ENCODE measurements at regions of chr20 and their contacts with region 1.

Region 1: DNA sequence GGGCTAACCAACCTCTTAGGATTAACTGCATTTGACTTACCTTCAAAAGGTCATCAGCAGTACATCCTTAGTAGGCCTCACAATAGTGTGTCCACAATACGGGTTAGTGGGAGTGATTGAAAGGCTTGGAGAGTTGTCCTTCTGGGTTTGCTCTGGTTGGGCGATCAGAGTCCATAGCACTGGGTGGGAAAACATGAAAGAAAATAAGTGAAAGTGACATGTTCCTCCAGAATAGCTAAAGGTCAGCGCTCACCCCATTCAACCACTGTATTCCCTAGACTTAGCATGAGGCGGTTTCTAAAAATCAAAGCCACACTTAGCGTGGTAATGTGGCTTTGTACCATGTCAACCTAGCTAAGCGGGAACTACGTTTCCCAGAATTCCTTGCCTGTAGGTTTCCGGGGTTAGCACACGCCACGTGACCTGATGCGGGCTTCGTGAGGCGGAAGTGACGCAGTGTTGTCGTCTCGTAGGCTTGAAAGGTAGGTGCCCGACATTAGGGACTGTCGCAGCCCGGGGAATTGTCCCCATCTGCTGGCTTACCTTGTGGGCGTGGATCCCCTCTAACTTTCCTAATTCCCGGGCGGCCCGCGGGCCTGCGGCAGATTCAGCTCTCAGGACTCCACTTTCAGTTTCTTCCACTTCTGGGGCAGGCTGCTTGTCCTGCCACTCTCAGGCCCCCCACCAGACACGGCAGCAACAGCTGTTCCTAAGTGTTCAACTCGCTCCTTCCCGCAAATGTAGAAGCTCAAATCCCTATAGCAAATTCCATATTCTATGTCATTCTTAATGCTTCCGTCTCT is 19.8 kb upstream of the SCP2D1 start:
- DNase-seq: peak; percentile 88 to 95 (median 91)
- ATAC-seq: peak; percentile 99 to 100 (median 100)
- H3K4me3 ChIP-seq: peak overlapping the region; percentile 64 to 93 (median 84)
- H3K27ac ChIP-seq: peak overlapping the region; percentile 61 to 96 (median 90)
- H3K4me1 ChIP-seq: peaks cover 0 to 13% (median 5%) of the 10 kb centered on the region in 12 donors
- H3K27me3 ChIP-seq: peaks cover 0 to 4% (median 0%) of the 10 kb centered on the region in 9 donors
- CTCF ChIP-seq: peak in 4 of 12 donors; percentile 16 to 28 (median 24)
- POLR2A ChIP-seq: peak in 1 of 2 donors; percentile 80

Region 2: GRCh38 chr20:18287915-18288748 is 505.7 kb before region 1 on chr20 and contains the start of gene ZNF133:
- intact Hi-C with region 1: loop called in 1 of 10 experiments (anchors 10 kb)
- DNase-seq: peak; percentile 96 to 97 (median 97)
- ATAC-seq: peak; percentile 99
- H3K4me3 ChIP-seq: peak within 1 kb of the TSS; percentile 62 to 99 (median 78)
- H3K27ac ChIP-seq: peak within 1 kb of the TSS; percentile 80 to 100 (median 95)
- H3K4me1 ChIP-seq: peaks cover 0 to 21% (median 12%) of the 10 kb centered on the region in 12 donors
- H3K27me3 ChIP-seq: peaks cover 0 to 9% (median 0%) of the 10 kb centered on the region in 9 donors
- CTCF ChIP-seq: peak in 3 of 12 donors; percentile 15 to 24 (median 23)
- POLR2A ChIP-seq: peak in 1 of 2 donors; percentile 75
- total RNA-seq, gene ZNF133: 4.0 to 9.8 (median 6.3) TPM

Region 3: GRCh38 chr20:18496740-18497592 is 296.9 kb before region 1 on chr20 and contains the start of gene RBBP9:
- intact Hi-C with region 1: loop called in 1 of 10 experiments (anchors 10 kb)
- DNase-seq: peak; percentile 87 to 94 (median 90)
- ATAC-seq: peak; percentile 99 to 100 (median 100)
- H3K4me3 ChIP-seq: peak within 1 kb of the TSS; percentile 66 to 90 (median 76)
- H3K27ac ChIP-seq: peak within 1 kb of the TSS in 11 of 12 donors; percentile 31 to 76 (median 65)
- H3K4me1 ChIP-seq: peaks cover 3 to 16% (median 13%) of the 10 kb centered on the region in 12 donors
- H3K27me3 ChIP-seq: no peaks in the 10 kb centered on the region
- CTCF ChIP-seq: no peak
- POLR2A ChIP-seq: peak in 1 of 2 donors; percentile 8
- total RNA-seq, gene RBBP9: 4.6 to 9.1 (median 6.2) TPM

Region 4: DNA sequence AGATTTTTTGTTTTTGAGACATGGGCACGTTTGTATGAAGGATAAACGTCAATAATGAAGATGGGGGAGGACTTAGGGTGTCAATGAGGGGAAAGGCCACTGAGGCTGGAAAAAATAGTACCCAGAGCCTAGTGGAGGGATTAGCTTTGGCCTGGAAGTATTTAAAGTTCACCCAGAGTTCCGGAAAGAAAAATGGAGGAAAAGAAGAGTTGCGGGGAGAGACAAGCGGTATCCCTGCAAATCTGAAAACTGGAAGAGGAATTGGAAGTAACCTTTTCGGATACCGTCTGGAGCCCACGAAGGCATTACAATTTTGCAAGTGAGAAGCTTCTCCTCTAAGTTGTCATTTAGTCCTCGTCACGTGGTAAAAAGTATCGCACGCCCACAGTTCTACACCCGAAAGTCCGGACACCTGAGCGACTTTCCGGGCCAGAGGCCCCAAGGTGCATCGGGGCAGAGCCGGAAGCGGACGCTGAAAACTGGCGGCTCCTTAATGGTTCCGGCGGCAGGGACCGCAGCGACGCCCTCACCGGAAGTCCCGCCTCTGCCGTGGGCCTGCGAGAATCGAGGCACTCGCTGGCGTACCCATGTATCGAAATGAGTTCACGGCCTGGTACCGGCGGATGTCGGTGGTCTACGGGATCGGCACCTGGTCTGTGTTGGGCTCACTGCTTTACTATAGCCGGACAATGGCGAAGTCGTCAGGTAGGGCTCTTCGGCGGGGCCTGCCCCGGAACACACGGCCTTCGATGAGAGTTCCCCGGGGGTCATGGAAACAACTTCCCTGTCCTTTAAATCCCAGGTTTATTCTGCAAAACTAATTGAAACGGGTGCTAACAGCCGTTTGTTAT is 226.7 kb before region 1 on chr20 and contains the start of gene SMIM26:
- intact Hi-C with region 1: loop called in 2 of 10 experiments (anchors 10 kb)
- DNase-seq: peak; percentile 92 to 97 (median 96)
- ATAC-seq: peak; percentile 98 to 100 (median 100)
- H3K4me3 ChIP-seq: peak within 1 kb of the TSS; percentile 64 to 83 (median 74)
- H3K27ac ChIP-seq: peak within 1 kb of the TSS; percentile 63 to 93 (median 83)
- H3K4me1 ChIP-seq: peaks cover 0 to 31% (median 6%) of the 10 kb centered on the region in 12 donors
- H3K27me3 ChIP-seq: no peaks in the 10 kb centered on the region
- CTCF ChIP-seq: no peak
- POLR2A ChIP-seq: peak in 1 of 2 donors; percentile 60
- total RNA-seq, gene SMIM26: 80.1 to 224 (median 103) TPM

Region 5: GRCh38 chr20:18587665-18588573 is 205.9 kb before region 1 on chr20 and contains the start of gene DTD1:
- intact Hi-C with region 1: loop called in 1 of 10 experiments (anchors 10 kb)
- DNase-seq: peak; percentile 93 to 98 (median 96)
- ATAC-seq: peak; percentile 87 to 99 (median 98)
- H3K4me3 ChIP-seq: peak within 1 kb of the TSS; percentile 71 to 98 (median 88)
- H3K27ac ChIP-seq: peak within 1 kb of the TSS in 11 of 12 donors; percentile 65 to 90 (median 80)
- H3K4me1 ChIP-seq: peaks cover 0 to 16% (median 6%) of the 10 kb centered on the region in 12 donors
- H3K27me3 ChIP-seq: no peaks in the 10 kb centered on the region
- CTCF ChIP-seq: peak; percentile 54 to 88 (median 72)
- POLR2A ChIP-seq: peak in 1 of 2 donors; percentile 62
- total RNA-seq, gene DTD1: 12.1 to 20.8 (median 15.6) TPM

Region 6: DNA sequence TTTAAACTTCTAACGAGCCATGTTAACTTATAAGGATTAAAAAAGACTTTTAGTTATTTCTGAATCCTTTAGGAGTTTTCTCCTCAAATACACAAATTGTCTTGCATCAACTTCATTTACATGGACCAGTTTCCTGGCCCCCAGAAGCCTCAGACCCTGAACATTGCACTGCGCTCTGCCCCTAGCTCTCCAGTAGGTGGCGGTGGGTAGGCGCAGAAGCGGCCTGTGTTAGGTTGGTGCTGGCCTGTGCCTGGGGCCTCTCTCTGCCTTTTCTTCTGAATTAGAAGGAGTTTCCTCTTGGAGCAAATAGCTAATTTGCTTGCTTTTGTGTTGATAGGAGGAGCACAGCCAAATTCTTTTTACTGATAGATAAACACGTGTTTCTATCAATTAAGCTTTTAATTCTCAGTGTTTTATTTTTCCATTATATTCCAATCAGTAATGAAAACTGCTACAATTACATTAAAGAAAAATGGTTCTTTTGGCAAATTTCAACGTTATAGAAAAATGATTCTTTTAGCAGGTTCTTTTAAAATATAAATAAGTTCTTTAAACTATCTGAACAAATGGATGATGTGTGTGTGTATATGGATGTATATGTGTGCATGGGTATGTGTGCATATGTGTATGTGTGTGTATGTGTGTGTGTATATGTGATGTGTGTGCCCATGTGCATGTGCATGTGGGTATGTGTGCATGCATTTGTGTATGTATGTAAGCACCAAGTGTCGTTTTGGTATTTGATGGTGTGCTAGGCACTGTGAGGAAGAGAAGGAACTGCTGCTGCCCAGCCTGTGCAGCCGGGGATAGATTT is 161.4 kb before region 1 on chr20:
- intact Hi-C with region 1: loop called in 1 of 10 experiments (anchors 10 kb)
- DNase-seq: peak; percentile 56 to 70 (median 61)
- ATAC-seq: peak; percentile 88 to 94 (median 89)
- H3K4me3 ChIP-seq: no peak overlapping the region
- H3K27ac ChIP-seq: no peak overlapping the region
- H3K4me1 ChIP-seq: peaks cover 0 to 5% (median 0%) of the 10 kb centered on the region in 12 donors
- H3K27me3 ChIP-seq: no peaks in the 10 kb centered on the region
- CTCF ChIP-seq: peak; percentile 77 to 96 (median 86)
- POLR2A ChIP-seq: no peak

Region 7: GRCh38 chr20:18839507-18840247 is 45.9 kb after region 1 on chr20:
- intact Hi-C with region 1: loop called in 1 of 10 experiments (anchors 2 kb)
- DNase-seq: no peak
- ATAC-seq: no peak
- H3K4me3 ChIP-seq: no peak overlapping the region
- H3K27ac ChIP-seq: no peak overlapping the region
- H3K4me1 ChIP-seq: no peaks in the 10 kb centered on the region
- H3K27me3 ChIP-seq: peaks cover 0 to 10% (median 0%) of the 10 kb centered on the region in 9 donors
- CTCF ChIP-seq: no peak
- POLR2A ChIP-seq: no peak